GM12878 (cell line): ENCODE measurements at regions of chr16 and their contacts with region 1.

Region 1: GRCh38 chr16:65671-66137 is 6.7 kb downstream of the RHBDF1 start:
- DNase-seq: no peak
- ATAC-seq: peak; percentile 96
- H3K4me3 ChIP-seq: no peak overlapping the region
- H3K27ac ChIP-seq: no peak overlapping the region
- H3K4me1 ChIP-seq: no peaks in the 10 kb centered on the region
- H3K27me3 ChIP-seq: peaks cover 0 to under 1% of the 10 kb centered on the region in 2 experiments; a peak in 3 of 4 replicates
- CTCF ChIP-seq: peak; percentile 97 to 99 (median 99); a peak in 5 of 6 replicates
- EP300 ChIP-seq: no peak
- POLR2A ChIP-seq: no peak
- RAD21 ChIP-seq: peak; percentile 95

Region 2: GRCh38 chr16:38939-39892 is 26.5 kb before region 1 on chr16:
- CTCF ChIA-PET with region 1: interaction called, 19 read pairs
- POLR2A ChIA-PET with region 1: interaction called, 3 read pairs
- RAD21 ChIA-PET with region 1: interaction called, 5 read pairs
- SMC1A ChIA-PET with region 1: interaction called, 8 read pairs
- in situ Hi-C with region 1: no loop called
- intact Hi-C with region 1: no loop called
- DNase-seq: peak; percentile 79
- ATAC-seq: peak; percentile 91
- H3K4me3 ChIP-seq: no peak overlapping the region
- H3K27ac ChIP-seq: peak overlapping the region; percentile 75
- H3K4me1 ChIP-seq: peaks cover 34% of the 10 kb centered on the region
- H3K27me3 ChIP-seq: no peaks in the 10 kb centered on the region
- CTCF ChIP-seq: no peak
- EP300 ChIP-seq: peak; percentile 35 to 76; a peak in 3 of 4 replicates
- POLR2A ChIP-seq: peak; percentile 82
- RAD21 ChIP-seq: no peak

Region 3: DNA sequence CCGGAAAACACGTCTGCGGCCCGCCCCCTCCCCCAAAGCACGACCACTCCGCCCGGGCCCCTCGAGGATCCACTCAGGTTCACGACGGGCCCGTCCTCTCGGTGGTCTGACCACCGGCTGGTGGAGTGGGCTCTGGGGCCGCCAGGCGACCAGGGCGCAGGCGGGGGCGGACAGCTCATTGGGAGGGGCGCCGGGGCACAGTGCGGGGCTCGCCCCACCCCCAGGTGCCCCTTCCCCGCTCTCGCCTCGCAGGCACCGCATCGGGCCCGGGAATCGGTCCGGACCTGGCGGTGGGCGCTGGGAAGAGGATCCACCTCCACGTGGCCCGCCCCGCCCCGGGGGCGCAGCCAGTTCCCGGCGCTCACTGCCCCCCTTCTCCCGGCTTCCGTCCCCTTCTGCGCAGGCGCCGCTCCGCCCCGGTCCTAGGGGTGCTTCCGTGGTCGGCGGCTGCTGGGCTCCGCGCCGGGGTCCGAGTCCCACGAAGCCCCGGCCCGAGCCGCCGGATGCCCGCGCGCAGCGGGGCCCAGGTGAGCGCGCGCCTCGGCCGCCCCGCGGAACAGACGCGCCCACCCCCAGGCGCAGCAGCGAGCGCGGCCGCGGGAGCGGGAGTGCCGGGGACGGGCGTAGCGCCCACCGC is 12.2 kb after region 1 on chr16 and contains the start of gene MPG:
- CTCF ChIA-PET with region 1: interaction called, 36 read pairs
- POLR2A ChIA-PET with region 1: interaction called, 3 read pairs
- RAD21 ChIA-PET with region 1: interaction called, 4 read pairs
- SMC1A ChIA-PET with region 1: interaction called, 16 read pairs
- in situ Hi-C with region 1: no loop called
- intact Hi-C with region 1: no loop called
- DNase-seq: no peak
- ATAC-seq: peak; percentile 84
- H3K4me3 ChIP-seq: peak within 1 kb of the TSS; percentile 82
- H3K27ac ChIP-seq: peak within 1 kb of the TSS; percentile 85
- H3K4me1 ChIP-seq: peaks cover 20% of the 10 kb centered on the region
- H3K27me3 ChIP-seq: peaks cover 2 to 4% of the 10 kb centered on the region in 2 experiments; a peak in 3 of 4 replicates
- CTCF ChIP-seq: no peak
- EP300 ChIP-seq: no peak
- POLR2A ChIP-seq: peak; percentile 79
- RAD21 ChIP-seq: no peak
- polyA plus RNA-seq, gene MPG: 0.32 to 4.8 TPM

Region 4: GRCh38 chr16:96935-97381 is 31.3 kb after region 1 on chr16:
- CTCF ChIA-PET with region 1: interaction called, 319 read pairs
- POLR2A ChIA-PET with region 1: interaction called, 18 read pairs
- RAD21 ChIA-PET with region 1: interaction called, 132 read pairs
- SMC1A ChIA-PET with region 1: interaction called, 77 read pairs
- in situ Hi-C with region 1: no loop called
- intact Hi-C with region 1: loop called (anchors 1 kb)
- DNase-seq: peak; percentile 55
- ATAC-seq: peak; percentile 99
- H3K4me3 ChIP-seq: no peak overlapping the region
- H3K27ac ChIP-seq: no peak overlapping the region
- H3K4me1 ChIP-seq: no peaks in the 10 kb centered on the region
- H3K27me3 ChIP-seq: no peaks in the 10 kb centered on the region
- CTCF ChIP-seq: peak; percentile 99 to 100 (median 100); a peak in 5 of 6 replicates
- EP300 ChIP-seq: no peak
- POLR2A ChIP-seq: peak; percentile 58
- RAD21 ChIP-seq: peak; percentile 79

Region 5: DNA sequence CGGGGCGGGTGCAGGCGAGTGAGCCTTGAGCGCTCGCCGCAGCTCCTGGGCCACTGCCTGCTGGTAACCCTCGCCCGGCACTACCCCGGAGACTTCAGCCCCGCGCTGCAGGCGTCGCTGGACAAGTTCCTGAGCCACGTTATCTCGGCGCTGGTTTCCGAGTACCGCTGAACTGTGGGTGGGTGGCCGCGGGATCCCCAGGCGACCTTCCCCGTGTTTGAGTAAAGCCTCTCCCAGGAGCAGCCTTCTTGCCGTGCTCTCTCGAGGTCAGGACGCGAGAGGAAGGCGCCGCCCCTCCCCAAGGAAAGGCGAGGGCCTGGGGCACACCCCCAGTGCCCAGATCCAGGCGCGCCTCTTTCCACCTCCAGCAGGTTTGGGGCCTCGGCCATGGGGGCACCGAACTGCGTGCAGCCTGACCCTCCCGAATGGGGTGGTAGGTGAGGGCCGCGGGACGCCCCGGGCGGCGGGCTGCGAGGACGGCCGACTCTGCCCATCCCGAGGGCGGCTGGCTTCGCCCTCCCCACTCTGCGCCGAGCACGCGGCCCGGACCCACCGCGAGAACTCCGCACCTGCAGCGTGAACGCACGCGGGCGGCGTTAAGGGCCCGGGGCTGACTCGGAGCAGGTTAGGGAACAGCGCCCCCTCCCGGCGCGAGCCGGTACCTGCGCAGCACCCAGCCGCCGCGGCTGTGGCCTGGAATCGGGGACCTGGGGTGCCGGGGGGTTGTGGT is 115.4 kb after region 1 on chr16:
- CTCF ChIA-PET with region 1: interaction called, 7 read pairs
- POLR2A ChIA-PET with region 1: no interaction called
- RAD21 ChIA-PET with region 1: interaction called, 4 read pairs
- SMC1A ChIA-PET with region 1: interaction called, 4 read pairs
- in situ Hi-C with region 1: no loop called
- intact Hi-C with region 1: loop called (anchors 1 kb)
- DNase-seq: peak; percentile 7
- ATAC-seq: peak; percentile 93
- H3K4me3 ChIP-seq: no peak overlapping the region
- H3K27ac ChIP-seq: no peak overlapping the region
- H3K4me1 ChIP-seq: peaks cover 8% of the 10 kb centered on the region; the same call in 1 of the 2 replicates
- H3K27me3 ChIP-seq: peaks cover 2 to 5% of the 10 kb centered on the region in 2 experiments; a peak in 3 of 4 replicates
- CTCF ChIP-seq: peak; percentile 87 to 97 (median 97)
- EP300 ChIP-seq: no peak
- POLR2A ChIP-seq: peak; percentile 75
- RAD21 ChIP-seq: peak; percentile 53

Region 6: GRCh38 chr16:278863-279366 is 213.2 kb after region 1 on chr16:
- CTCF ChIA-PET with region 1: no interaction called
- POLR2A ChIA-PET with region 1: no interaction called
- RAD21 ChIA-PET with region 1: no interaction called
- SMC1A ChIA-PET with region 1: no interaction called
- in situ Hi-C with region 1: no loop called
- intact Hi-C with region 1: no loop called
- DNase-seq: peak; percentile 8
- ATAC-seq: peak; percentile 88
- H3K4me3 ChIP-seq: no peak overlapping the region
- H3K27ac ChIP-seq: no peak overlapping the region
- H3K4me1 ChIP-seq: no peaks in the 10 kb centered on the region
- H3K27me3 ChIP-seq: peaks cover 0 to 3% of the 10 kb centered on the region in 2 experiments; a peak in 2 of 4 replicates
- CTCF ChIP-seq: no peak
- EP300 ChIP-seq: no peak
- POLR2A ChIP-seq: no peak
- RAD21 ChIP-seq: no peak